Activated naive CD4-positive, alpha-beta T cell treated with anti-CD3 and anti-CD28 coated beads for 36 hours (primary cell): ENCODE measurements at regions of chr3 and their contacts with region 1.

Region 1: GRCh38 chr3:25648107-25648535 is 16.6 kb downstream of the TOP2B start:
- DNase-seq: peak; percentile 91
- H3K4me3 Mint-ChIP-seq: no peak overlapping the region
- H3K27ac Mint-ChIP-seq: no peak overlapping the region
- H3K4me1 Mint-ChIP-seq: peaks cover 52% of the 10 kb centered on the region
- H3K27me3 Mint-ChIP-seq: no peaks in the 10 kb centered on the region

Region 2: DNA sequence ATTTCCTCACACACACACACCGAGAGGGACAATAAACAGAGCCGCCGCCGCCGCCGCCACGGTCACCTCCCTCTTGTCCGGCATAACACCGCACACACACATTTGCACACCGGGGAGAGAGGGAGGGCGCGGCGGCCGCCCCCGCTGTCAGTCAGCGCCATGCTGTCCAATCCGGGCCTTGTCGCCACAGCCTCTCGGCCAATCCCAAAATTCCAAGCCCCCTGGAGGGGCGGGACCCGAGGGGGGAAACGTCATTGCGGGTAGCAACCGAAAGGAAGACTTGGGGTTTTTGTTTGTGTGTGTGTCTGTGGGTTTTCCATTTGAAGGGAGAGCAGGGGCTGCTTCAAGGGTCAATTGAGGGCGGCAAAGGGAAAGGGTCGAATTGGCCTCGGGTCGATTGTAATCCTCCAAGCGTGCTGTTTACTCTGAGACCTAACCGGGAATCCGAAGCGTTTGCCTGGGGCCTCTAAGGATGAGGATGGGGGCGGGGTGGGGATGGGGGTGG is 16.7 kb after region 1 on chr3 and contains the start of gene TOP2B:
- CTCF ChIA-PET with region 1: interaction called, 18 read pairs
- intact Hi-C with region 1: loop called (anchors 1 kb)
- DNase-seq: peak; percentile 97
- H3K4me3 Mint-ChIP-seq: peak within 1 kb of the TSS; percentile 92
- H3K27ac Mint-ChIP-seq: peak within 1 kb of the TSS; percentile 100
- H3K4me1 Mint-ChIP-seq: peaks cover 42% of the 10 kb centered on the region
- H3K27me3 Mint-ChIP-seq: no peaks in the 10 kb centered on the region
- total RNA-seq, gene TOP2B: 113 to 114 TPM

Region 3: GRCh38 chr3:25831578-25831977 is 183.5 kb after region 1 on chr3:
- CTCF ChIA-PET with region 1: interaction called, 16 read pairs
- intact Hi-C with region 1: loop called (anchors 1 kb)
- DNase-seq: no peak
- H3K4me3 Mint-ChIP-seq: no peak overlapping the region
- H3K27ac Mint-ChIP-seq: no peak overlapping the region
- H3K4me1 Mint-ChIP-seq: peaks cover 2% of the 10 kb centered on the region
- H3K27me3 Mint-ChIP-seq: peaks cover 4% of the 10 kb centered on the region

Region 4: GRCh38 chr3:25910997-25911396 is 262.9 kb after region 1 on chr3:
- CTCF ChIA-PET with region 1: interaction called, 13 read pairs
- intact Hi-C with region 1: loop called (anchors 1 kb)
- DNase-seq: peak; percentile 76
- H3K4me3 Mint-ChIP-seq: no peak overlapping the region
- H3K27ac Mint-ChIP-seq: no peak overlapping the region
- H3K4me1 Mint-ChIP-seq: no peaks in the 10 kb centered on the region
- H3K27me3 Mint-ChIP-seq: no peaks in the 10 kb centered on the region

Region 5: DNA sequence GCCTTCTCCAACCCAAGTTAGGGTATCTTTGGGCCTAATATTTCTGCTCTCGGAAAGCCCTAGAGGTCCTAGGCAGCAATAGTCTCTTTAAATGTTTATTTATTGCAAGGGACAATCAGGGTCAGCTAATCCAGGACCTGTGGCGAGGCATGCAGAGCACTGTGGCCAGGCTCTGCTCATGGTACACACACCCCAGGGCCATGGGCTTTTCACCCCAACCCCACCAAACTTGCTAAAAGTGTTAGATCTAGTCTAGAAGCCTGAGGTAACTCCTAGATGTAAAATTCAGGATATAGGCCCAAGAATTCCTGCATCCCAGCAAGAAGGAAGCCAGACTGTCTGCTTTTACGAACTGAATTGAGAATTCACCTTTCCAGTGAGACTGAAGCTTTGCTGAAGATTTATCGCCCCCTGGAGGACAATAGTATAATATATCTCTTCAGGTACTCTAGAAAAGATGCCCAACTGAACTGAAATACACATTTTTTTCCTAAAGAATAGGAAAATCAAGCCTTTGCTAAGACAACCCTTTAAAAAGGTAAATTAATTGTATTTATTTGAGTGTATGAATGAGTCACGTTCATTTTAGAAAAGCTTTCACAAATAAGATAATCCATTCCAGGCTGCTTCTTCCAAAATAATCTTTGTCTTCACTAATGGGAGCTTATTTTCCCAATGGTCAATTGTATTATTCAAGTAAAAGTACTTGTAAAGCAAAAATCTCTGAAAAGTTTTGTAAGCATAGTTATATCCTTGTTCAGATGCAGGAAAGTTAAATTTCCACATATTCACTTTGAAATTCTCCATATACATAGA is 1064.3 kb after region 1 on chr3:
- CTCF ChIA-PET with region 1: no interaction called
- intact Hi-C with region 1: loop called (anchors 2 kb)
- DNase-seq: no peak
- H3K4me3 Mint-ChIP-seq: no peak overlapping the region
- H3K27ac Mint-ChIP-seq: no peak overlapping the region
- H3K4me1 Mint-ChIP-seq: no peaks in the 10 kb centered on the region
- H3K27me3 Mint-ChIP-seq: peaks cover 2% of the 10 kb centered on the region